A673 (cell line): ENCODE measurements at regions of chr15 and their contacts with region 1.

Region 1: GRCh38 chr15:75684642-75685041 is 28.0 kb downstream of the CSPG4 start:
- DNase-seq: no peak
- H3K4me3 ChIP-seq: no peak overlapping the region
- H3K27ac ChIP-seq: no peak overlapping the region
- H3K4me1 ChIP-seq: no peaks in the 10 kb centered on the region
- H3K27me3 ChIP-seq: no peaks in the 10 kb centered on the region
- CTCF ChIP-seq: no peak

Region 2: GRCh38 chr15:75029378-75030022 is 655.1 kb before region 1 on chr15:
- CTCF ChIA-PET with region 1: interaction called, 6 read pairs
- POLR2A ChIA-PET with region 1: no interaction called
- intact Hi-C with region 1: loop called (anchors 1 kb)
- DNase-seq: peak; percentile 97
- H3K4me3 ChIP-seq: peak overlapping the region; percentile 21
- H3K27ac ChIP-seq: peak overlapping the region; percentile 66
- H3K4me1 ChIP-seq: peaks cover 54% of the 10 kb centered on the region
- H3K27me3 ChIP-seq: no peaks in the 10 kb centered on the region
- CTCF ChIP-seq: peak; percentile 92

Region 3: GRCh38 chr15:75249726-75250125 is 434.9 kb before region 1 on chr15:
- CTCF ChIA-PET with region 1: interaction called, 19 read pairs
- POLR2A ChIA-PET with region 1: no interaction called
- intact Hi-C with region 1: no loop called
- DNase-seq: no peak
- H3K4me3 ChIP-seq: no peak overlapping the region
- H3K27ac ChIP-seq: no peak overlapping the region
- H3K4me1 ChIP-seq: no peaks in the 10 kb centered on the region
- H3K27me3 ChIP-seq: peaks cover 3% of the 10 kb centered on the region
- CTCF ChIP-seq: no peak

Region 4: DNA sequence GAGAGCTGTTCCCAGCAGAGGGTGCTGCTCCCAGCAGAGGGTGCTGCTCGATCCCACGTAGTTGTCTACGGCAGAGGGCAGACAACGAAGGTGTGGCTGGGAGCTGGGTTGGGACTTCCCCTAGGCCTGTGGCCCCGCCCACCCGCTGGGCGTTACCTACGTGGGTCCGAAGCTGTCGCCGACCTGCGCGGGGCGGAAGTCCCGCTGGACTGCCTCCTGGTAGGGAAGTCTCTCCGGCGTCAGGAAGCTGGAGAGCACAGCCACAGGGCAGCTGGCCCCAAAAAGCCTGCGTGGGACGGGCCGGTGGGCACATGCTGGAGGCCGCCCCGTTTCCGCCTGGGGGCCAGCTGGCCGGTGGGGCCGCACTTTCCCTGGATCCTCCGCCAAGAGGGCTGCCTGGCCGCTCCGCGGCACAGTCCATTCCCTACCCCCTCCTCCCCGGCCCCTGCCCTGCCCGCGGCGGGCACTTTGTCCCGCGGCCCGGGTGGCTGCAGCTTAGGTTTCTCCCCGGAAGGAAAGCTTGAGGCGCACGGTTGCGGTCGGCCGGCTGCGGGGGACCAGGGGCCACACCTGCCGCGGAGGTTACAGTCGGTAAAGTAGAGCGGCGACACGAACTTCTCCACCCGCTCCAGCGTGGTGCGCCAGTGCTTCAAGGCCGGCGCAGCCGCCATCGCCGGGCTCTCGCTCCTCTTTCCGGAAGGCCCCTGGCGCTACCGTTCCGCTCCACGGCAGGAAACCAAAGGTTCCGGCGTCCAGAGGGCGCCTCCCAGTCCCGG is 316.5 kb before region 1 on chr15 and contains the start of gene MAN2C1:
- CTCF ChIA-PET with region 1: interaction called, 4 read pairs
- POLR2A ChIA-PET with region 1: no interaction called
- intact Hi-C with region 1: loop called (anchors 1 kb)
- DNase-seq: peak; percentile 97
- H3K4me3 ChIP-seq: peak within 1 kb of the TSS; percentile 95
- H3K27ac ChIP-seq: peak within 1 kb of the TSS; percentile 98
- H3K4me1 ChIP-seq: peaks cover 13% of the 10 kb centered on the region
- H3K27me3 ChIP-seq: no peaks in the 10 kb centered on the region
- CTCF ChIP-seq: peak; percentile 94
- total RNA-seq, gene MAN2C1: 169 and 205 TPM in 2 replicates

Region 5: DNA sequence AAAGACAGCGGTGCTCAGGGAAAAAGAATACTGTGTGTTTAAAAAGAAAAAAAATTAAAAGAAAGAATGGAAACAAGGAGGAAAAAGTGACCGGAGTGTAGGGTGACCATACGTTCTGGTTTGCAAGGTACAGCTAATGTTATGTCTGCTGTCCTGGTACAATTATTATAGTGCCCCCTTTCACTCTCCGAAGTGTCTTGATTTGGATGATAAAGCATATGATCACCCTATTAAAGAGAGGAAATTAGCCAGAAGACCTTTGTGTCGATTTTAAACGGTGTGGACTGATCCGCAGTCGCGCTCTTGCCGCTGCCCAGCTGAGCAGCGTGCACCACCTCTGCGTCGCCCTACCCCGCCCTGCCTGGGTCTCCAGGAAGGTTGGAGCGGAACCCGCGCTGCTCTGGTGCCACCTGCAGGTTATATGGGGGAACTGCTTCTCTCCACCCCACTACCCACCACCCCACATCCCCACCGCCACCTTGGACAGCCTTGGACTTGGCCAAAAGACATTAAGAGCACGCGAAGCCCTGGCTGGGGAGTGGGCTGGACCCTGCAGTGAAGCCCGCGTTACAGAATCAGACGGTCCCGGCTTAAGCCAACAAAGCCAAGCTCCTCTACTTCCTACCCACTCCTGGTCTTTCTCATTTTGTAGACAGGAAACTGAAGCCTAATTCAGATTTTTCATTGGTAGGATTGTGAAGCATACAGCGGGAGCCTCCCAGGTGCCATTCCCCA is 117.4 kb after region 1 on chr15:
- CTCF ChIA-PET with region 1: interaction called, 7 read pairs
- POLR2A ChIA-PET with region 1: no interaction called
- intact Hi-C with region 1: loop called (anchors 1 kb)
- DNase-seq: peak; percentile 83
- H3K4me3 ChIP-seq: peak overlapping the region; percentile 16
- H3K27ac ChIP-seq: no peak overlapping the region
- H3K4me1 ChIP-seq: no peaks in the 10 kb centered on the region
- H3K27me3 ChIP-seq: peaks cover 22% of the 10 kb centered on the region
- CTCF ChIP-seq: peak; percentile 86

Region 6: DNA sequence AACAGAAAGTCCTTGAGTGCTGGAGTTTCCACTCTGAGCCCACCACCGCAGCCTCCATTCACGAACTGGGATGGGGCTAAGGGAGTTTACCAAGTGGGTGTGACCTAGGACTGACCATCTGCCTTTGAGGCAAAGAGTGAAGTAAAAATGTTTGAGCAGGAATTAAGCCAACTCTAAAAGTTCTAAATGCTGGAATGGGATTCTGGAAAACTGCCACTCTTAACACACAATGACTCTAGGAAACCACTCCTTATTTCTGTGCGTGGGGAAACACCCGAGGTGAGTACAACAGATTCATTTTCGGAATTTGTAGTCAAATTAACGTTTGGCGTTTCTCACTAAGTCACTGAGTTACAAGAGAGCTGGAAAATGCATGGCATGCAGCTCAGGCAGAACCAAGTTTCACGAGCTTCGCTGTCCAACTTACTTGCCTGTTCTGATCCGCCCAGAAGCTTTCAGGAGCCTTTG is 683.5 kb after region 1 on chr15:
- CTCF ChIA-PET with region 1: no interaction called
- POLR2A ChIA-PET with region 1: no interaction called
- intact Hi-C with region 1: no loop called
- DNase-seq: no peak
- H3K4me3 ChIP-seq: no peak overlapping the region
- H3K27ac ChIP-seq: no peak overlapping the region
- H3K4me1 ChIP-seq: no peaks in the 10 kb centered on the region
- H3K27me3 ChIP-seq: no peaks in the 10 kb centered on the region
- CTCF ChIP-seq: no peak